Naive thymus-derived CD4-positive, alpha-beta T cell (primary cell): ENCODE measurements at regions of chr6 and their contacts with region 1.

Region 1: DNA sequence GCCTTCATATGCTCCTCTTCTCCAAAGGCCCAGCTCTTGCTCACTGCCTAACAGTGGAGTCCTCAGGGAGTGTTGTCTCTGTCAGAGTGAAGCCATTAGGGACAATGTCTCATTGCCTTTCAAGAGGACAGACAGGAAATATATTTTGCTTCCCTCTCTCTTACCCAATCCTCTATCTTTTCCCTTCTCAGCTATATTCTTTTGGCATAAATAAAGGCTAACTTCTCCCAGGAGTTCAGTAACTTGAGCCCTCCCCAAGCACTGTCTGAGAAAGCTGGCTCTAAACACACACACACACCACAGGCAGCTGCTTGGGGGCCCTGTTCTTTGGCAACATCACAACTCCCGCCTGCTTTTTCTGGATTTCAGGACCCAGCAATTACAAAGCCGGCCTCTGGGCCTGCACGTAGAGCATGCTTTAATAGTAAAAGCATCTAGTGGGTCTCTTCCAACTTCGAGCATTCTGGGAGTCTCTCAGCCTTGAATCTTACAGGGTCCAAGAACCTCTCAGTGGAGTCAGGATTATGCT is 34.7 kb upstream of the LAMA4 start:
- DNase-seq: no peak
- ATAC-seq: no peak
- H3K4me3 ChIP-seq: no peak overlapping the region
- H3K4me3 Mint-ChIP-seq: no peak overlapping the region
- H3K27ac ChIP-seq: no peak overlapping the region
- H3K27ac Mint-ChIP-seq: peak overlapping the region in 1 of 9 donors; percentile 38
- H3K4me1 ChIP-seq: peaks cover 0 to 17% of the 10 kb centered on the region in 2 donors
- H3K4me1 Mint-ChIP-seq: peaks cover 0 to 29% (median 9%) of the 10 kb centered on the region in 7 donors
- H3K27me3 ChIP-seq: peaks cover 0 to 3% of the 10 kb centered on the region in 2 donors
- H3K27me3 Mint-ChIP-seq: peaks cover 14 to 64% (median 32%) of the 10 kb centered on the region in 5 donors

Region 2: GRCh38 chr6:112232845-112233256 is 56.3 kb before region 1 on chr6:
- CTCF ChIA-PET with region 1: no interaction called
- POLR2A ChIA-PET with region 1: no interaction called
- intact Hi-C with region 1: loop called in 1 of 2 experiments (anchors 5 kb)
- DNase-seq: no peak
- ATAC-seq: no peak
- H3K4me3 ChIP-seq: no peak overlapping the region
- H3K4me3 Mint-ChIP-seq: no peak overlapping the region
- H3K27ac ChIP-seq: no peak overlapping the region
- H3K27ac Mint-ChIP-seq: no peak overlapping the region
- H3K4me1 ChIP-seq: no peaks in the 10 kb centered on the region
- H3K4me1 Mint-ChIP-seq: peaks cover 0 to 11% (median 0%) of the 10 kb centered on the region in 7 donors
- H3K27me3 ChIP-seq: no peaks in the 10 kb centered on the region
- H3K27me3 Mint-ChIP-seq: peaks cover 15 to 65% (median 27%) of the 10 kb centered on the region in 5 donors

Region 3: GRCh38 chr6:112311950-112312547 is 22.9 kb after region 1 on chr6:
- CTCF ChIA-PET with region 1: interaction called, 3 read pairs
- POLR2A ChIA-PET with region 1: no interaction called
- intact Hi-C with region 1: loop called in 1 of 2 experiments (anchors 2 kb)
- DNase-seq: peak in 5 of 9 donors; percentile 5 to 24 (median 13)
- ATAC-seq: no peak
- H3K4me3 ChIP-seq: no peak overlapping the region
- H3K4me3 Mint-ChIP-seq: no peak overlapping the region
- H3K27ac ChIP-seq: no peak overlapping the region
- H3K27ac Mint-ChIP-seq: no peak overlapping the region
- H3K4me1 ChIP-seq: no peaks in the 10 kb centered on the region
- H3K4me1 Mint-ChIP-seq: no peaks in the 10 kb centered on the region
- H3K27me3 ChIP-seq: peaks cover 0 to 2% of the 10 kb centered on the region in 2 donors
- H3K27me3 Mint-ChIP-seq: peaks cover 15 to 34% (median 26%) of the 10 kb centered on the region in 5 donors